AG04449 (cell line): ENCODE measurements at regions of chr2 and their contacts with region 1.

Region 1: DNA sequence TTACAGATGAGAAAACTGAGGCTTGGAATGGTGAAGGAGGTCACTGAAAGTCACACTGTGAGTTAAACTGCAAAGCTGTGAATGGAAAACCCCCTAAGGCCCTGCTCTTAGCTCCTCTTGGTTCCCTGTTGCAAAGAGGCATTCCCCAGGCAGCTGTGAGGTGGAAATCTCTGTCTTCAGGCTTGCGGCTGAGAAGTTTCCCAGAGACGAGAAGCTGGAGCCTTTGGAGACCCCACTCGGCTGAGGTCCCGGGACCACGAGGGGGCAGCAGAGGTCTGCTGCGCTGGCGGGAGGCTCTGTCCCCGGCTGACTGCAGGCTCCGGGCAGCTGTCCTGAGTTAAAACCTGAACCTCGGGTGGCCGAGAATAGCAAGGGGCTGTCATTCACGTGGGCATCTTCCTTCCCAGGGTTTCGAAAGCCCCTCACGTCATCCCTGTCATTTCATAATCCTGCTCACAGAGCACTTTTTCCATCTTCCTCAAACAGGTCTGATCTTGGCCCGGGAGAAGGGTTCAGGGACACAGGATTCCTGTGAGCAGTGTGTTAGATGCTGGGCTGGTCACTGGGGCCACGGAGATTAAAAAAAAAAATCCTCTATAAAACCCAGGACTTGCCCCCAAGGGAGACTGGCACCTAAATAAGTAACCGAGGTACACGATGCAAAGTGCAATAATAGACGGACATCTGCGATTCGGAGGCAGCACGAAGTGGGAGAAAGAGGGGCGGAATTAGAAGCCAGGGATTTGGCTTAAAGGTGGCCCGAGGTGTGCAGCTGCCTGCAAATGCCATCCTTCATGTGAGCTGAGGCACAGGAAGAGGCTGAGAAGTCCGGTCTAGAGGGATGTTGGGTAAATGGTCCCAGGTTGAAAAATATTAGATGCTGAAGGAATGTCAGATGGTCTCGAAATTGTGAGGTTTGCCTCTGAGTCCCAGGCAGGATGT is 24.6 kb upstream of the ATOH8 start:
- DNase-seq: no peak
- H3K4me3 ChIP-seq: no peak overlapping the region
- CTCF ChIP-seq: peak; percentile 98

Region 2: GRCh38 chr2:85490861-85491755 is 238.0 kb before region 1 on chr2:
- CTCF ChIA-PET with region 1: no interaction called
- POLR2A ChIA-PET with region 1: no interaction called
- DNase-seq: no peak
- H3K4me3 ChIP-seq: no peak overlapping the region
- CTCF ChIP-seq: no peak

Region 3: GRCh38 chr2:85611705-85612587 is 117.2 kb before region 1 on chr2 and contains the start of gene C2orf68:
- CTCF ChIA-PET with region 1: no interaction called
- POLR2A ChIA-PET with region 1: no interaction called
- DNase-seq: no peak
- H3K4me3 ChIP-seq: peak within 1 kb of the TSS; percentile 83
- CTCF ChIP-seq: no peak

Region 4: DNA sequence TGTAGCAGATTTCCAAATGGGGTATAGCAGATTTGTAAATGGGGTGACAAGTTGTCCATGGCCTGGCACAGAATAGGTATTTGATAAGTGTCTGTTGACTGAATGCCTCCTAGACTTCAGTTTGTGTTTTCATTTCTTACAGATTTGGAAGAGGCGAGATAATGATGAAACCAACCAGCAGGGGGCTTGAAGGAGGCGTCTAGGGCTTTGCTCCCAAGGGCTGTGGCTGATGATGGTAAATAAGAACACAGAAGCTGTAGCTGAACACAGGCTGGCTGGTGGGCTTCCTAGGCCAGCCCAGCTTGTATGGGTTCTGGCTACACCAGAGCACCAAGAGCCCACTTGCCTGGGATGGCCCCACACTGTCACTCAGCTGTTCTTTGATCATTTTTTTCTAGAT is 80.5 kb before region 1 on chr2:
- CTCF ChIA-PET with region 1: interaction called, 915 read pairs
- POLR2A ChIA-PET with region 1: no interaction called
- DNase-seq: no peak
- H3K4me3 ChIP-seq: no peak overlapping the region
- CTCF ChIP-seq: peak; percentile 65

Region 5: DNA sequence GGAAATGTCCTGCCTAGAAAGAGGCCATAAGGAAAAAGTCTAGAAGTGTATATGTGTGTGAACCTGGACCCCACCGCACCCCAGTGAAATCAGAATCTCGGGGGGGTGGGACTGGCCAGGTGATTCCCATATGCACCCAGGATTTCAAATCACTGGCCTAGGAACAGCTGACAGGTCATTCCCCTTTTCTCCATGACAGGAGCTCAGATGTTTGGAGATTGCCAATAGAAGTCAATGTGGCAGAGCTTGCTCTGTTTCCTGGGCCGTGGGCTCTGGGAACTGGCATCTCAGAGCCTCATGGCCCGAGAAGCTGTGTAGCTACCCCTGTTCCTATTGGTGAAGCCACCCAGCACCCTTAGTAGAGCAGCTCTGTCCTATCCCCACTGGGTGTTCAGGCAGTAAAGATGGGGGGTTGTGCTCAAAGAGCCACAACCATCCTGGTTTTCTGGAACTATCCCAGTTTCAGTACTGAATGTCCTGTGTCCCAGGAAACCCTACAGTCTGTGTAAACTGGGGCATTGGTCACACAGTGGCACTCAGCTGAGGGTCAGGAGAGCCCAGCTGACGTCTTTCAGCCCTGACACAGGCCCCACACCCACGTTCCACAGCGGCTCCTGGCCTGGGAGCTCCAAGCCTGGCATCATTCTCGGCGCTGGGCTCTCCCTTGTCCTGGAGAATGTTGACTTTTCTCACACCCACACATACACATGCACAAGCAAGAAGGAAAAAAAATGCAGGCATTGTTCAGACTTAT is 16.1 kb before region 1 on chr2:
- CTCF ChIA-PET with region 1: interaction called, 221 read pairs
- POLR2A ChIA-PET with region 1: no interaction called
- DNase-seq: no peak
- H3K4me3 ChIP-seq: no peak overlapping the region
- CTCF ChIP-seq: no peak

Region 6: DNA sequence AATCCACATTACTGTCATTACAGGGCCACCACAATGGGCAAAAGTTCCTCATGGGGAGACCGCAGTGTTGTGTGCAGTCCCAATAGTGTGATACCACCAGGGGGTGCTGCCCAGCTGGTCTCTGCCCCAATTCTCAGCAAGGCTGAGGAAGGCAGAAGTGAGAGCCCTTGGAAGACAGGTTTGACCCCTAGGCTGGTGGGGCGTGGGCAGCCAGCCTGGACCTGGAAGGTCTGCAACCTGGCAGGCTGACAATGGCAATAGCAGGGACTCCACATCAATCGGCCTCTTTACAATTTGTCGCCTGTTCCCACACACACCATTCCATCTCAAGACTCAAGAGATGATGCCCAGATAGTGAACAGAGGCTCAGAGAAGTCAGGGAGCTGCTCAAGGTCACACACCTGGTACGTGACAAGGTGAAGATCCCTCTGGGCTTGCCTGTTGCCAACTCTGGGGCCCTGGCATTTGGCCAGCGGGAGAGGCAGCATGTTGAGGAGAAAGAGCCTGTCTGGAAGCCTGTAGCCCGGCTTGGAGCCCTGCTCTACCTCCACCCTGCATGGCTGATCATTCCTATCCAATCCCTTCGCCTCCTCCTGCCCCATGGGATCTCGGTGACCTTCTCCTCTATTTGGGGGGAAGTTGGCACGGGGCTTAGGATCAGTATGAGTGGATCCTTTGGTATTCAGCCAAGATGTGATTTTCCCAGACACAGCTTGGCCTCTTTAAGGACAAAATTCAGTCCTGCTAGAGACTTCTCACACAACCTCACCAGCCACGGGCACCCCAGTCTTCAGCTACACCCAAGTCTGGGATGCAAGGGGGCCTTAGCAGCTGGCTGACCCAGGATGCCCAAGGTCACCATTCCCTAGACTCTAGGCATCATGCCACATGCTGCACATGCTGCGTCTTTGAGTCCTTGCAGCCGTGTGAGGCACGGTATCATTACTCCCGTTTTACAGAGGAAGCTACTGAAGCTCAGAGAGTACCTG is 21.7 kb after region 1 on chr2:
- CTCF ChIA-PET with region 1: interaction called, 143 read pairs
- POLR2A ChIA-PET with region 1: no interaction called
- DNase-seq: no peak
- H3K4me3 ChIP-seq: no peak overlapping the region
- CTCF ChIP-seq: peak; percentile 87

Region 7: GRCh38 chr2:85804583-85804982 is 75.4 kb after region 1 on chr2:
- CTCF ChIA-PET with region 1: interaction called, 643 read pairs
- POLR2A ChIA-PET with region 1: no interaction called
- DNase-seq: no peak
- H3K4me3 ChIP-seq: no peak overlapping the region
- CTCF ChIP-seq: peak; percentile 24

Region 8: DNA sequence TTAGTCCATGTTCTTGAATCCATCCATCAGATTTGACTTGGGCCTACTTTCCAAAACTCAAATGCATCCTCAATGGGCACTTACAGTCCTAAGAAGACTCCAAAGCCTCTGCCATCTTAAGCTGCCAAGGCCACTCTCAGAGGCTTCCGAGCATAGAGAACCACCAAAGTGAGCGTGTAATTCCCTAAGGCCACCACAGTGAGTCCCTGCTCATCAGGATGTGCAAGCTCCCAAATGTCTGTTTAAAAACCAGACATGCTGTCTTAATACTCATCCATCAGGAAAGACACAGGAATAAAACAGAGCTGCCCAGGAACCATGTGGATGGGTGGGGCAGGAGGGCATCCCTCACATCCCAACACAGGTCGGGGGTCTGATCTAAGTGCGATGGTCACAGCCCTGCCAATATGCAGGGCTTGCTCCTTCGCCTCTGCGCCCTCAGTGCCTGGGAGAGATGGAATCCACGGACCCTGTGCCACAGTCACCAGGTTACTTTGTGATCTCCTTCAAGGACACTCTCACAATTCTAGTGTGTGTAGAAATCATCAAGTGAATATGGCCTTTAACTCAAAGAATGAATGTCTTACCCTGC is 296.2 kb after region 1 on chr2:
- CTCF ChIA-PET with region 1: no interaction called
- POLR2A ChIA-PET with region 1: no interaction called
- DNase-seq: no peak
- H3K4me3 ChIP-seq: no peak overlapping the region
- CTCF ChIP-seq: no peak

Region 9: GRCh38 chr2:86185517-86186212 is 456.5 kb after region 1 on chr2:
- CTCF ChIA-PET with region 1: no interaction called
- POLR2A ChIA-PET with region 1: no interaction called
- DNase-seq: no peak
- H3K4me3 ChIP-seq: no peak overlapping the region
- CTCF ChIP-seq: no peak